Activated T-helper 1 cell treated with anti-CD3 and anti-CD28 coated beads, Interleukin-12 subunit alpha, Interleukin-12 subunit beta, Interleukin-2, Interleukin-4 antibody, amounts not matched to agents 30 ng/mL and 10 ng/mL and 1 ng/mL, durations not matched to agents 14 hours and 24 hours and 36 hours (primary cell): ENCODE measurements at regions of chr12 and their contacts with region 1.

Region 1: GRCh38 chr12:54439521-54440255 is 20.6 kb upstream of the ITGA5 start:
- DNase-seq: no peak
- H3K4me3 Mint-ChIP-seq: no peak overlapping the region
- H3K27ac Mint-ChIP-seq: peak overlapping the region; percentile 62
- H3K4me1 Mint-ChIP-seq: peaks cover 16% of the 10 kb centered on the region
- H3K27me3 Mint-ChIP-seq: peaks cover 9% of the 10 kb centered on the region

Region 2: GRCh38 chr12:54321363-54321762 is 118.3 kb before region 1 on chr12:
- intact Hi-C with region 1: no loop called
- DNase-seq: no peak
- H3K4me3 Mint-ChIP-seq: no peak overlapping the region
- H3K27ac Mint-ChIP-seq: no peak overlapping the region
- H3K4me1 Mint-ChIP-seq: peaks cover 7% of the 10 kb centered on the region
- H3K27me3 Mint-ChIP-seq: peaks cover 7% of the 10 kb centered on the region

Region 3: DNA sequence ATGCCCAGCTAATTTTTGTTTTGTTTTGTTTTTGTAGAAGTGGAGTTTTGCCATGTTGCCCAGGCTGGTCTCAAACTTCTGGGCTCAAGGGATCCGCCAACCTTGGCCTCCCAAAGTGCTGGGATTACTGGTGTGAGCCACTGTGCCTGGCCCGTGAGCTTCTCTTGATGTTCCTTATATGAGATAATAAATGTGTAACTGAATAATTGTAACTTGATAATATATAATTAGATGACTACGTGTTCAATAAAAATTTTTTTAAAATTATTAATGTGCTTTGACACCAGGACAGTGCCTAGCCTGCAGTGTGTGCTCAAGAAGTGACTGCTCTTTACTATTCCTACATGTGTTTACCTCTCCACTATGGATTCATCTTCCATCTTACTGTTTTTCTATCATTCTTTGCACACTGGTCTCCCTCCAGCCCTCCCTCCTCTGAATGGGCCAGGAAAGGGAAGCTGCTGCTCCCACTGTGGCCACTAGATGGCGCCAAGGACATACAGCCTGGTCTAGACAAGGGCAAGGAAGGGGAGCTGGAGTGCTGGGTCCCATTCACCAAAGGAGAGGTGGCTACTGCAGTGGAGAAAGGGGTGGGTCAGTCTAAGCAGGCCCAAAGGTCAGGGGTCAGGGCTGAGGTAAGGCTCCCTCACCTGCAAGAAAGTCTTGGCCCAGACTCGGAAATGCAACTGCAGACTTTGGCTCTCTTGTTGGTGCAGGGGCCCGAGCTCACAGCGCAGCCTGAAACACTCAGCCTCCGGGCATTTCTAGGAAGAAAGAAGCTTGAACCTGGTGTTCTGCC is 40.5 kb before region 1 on chr12:
- intact Hi-C with region 1: loop called (anchors 1 kb)
- DNase-seq: peak; percentile 75
- H3K4me3 Mint-ChIP-seq: no peak overlapping the region
- H3K27ac Mint-ChIP-seq: peak overlapping the region; percentile 71
- H3K4me1 Mint-ChIP-seq: peaks cover 11% of the 10 kb centered on the region
- H3K27me3 Mint-ChIP-seq: no peaks in the 10 kb centered on the region

Region 4: GRCh38 chr12:54404061-54405004 is 35.4 kb before region 1 on chr12:
- intact Hi-C with region 1: loop called (anchors 1 kb)
- DNase-seq: peak; percentile 37
- H3K4me3 Mint-ChIP-seq: no peak overlapping the region
- H3K27ac Mint-ChIP-seq: no peak overlapping the region
- H3K4me1 Mint-ChIP-seq: peaks cover 10% of the 10 kb centered on the region
- H3K27me3 Mint-ChIP-seq: no peaks in the 10 kb centered on the region

Region 5: GRCh38 chr12:54419088-54419892 is 20.4 kb before region 1 on chr12 and contains the start of gene ITGA5:
- intact Hi-C with region 1: loop called (anchors 1 kb)
- DNase-seq: no peak
- H3K4me3 Mint-ChIP-seq: peak within 1 kb of the TSS; percentile 80
- H3K27ac Mint-ChIP-seq: peak within 1 kb of the TSS; percentile 86
- H3K4me1 Mint-ChIP-seq: peaks cover 52% of the 10 kb centered on the region
- H3K27me3 Mint-ChIP-seq: peaks cover 16% of the 10 kb centered on the region
- total RNA-seq, gene ITGA5: 31.2 and 31.6 TPM in 2 replicates

Region 6: DNA sequence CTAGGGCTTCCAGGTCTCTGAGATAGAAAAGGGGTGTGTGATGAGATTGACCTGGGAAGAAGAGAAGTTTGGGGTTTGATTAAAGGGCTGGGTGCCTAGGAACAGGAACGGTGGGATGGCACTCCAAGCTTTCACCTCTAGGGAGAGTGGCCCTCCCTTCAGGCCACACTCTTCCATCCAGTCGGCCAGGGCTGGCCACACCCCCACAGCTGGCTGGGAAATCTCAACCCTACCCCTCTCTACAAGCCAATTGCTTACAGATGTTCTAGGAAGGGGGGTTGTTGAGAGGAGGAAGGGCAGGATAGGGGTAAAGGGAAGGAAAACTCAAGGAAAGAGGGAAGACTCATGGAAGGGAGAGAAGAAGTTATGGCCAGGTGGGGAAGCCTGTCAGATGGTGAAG is 14.0 kb before region 1 on chr12:
- intact Hi-C with region 1: loop called (anchors 1 kb)
- DNase-seq: no peak
- H3K4me3 Mint-ChIP-seq: no peak overlapping the region
- H3K27ac Mint-ChIP-seq: no peak overlapping the region
- H3K4me1 Mint-ChIP-seq: peaks cover 51% of the 10 kb centered on the region
- H3K27me3 Mint-ChIP-seq: peaks cover 44% of the 10 kb centered on the region